Naive thymus-derived CD4-positive, alpha-beta T cell (primary cell): ENCODE measurements at regions of chr3 and their contacts with region 1.

Region 1: DNA sequence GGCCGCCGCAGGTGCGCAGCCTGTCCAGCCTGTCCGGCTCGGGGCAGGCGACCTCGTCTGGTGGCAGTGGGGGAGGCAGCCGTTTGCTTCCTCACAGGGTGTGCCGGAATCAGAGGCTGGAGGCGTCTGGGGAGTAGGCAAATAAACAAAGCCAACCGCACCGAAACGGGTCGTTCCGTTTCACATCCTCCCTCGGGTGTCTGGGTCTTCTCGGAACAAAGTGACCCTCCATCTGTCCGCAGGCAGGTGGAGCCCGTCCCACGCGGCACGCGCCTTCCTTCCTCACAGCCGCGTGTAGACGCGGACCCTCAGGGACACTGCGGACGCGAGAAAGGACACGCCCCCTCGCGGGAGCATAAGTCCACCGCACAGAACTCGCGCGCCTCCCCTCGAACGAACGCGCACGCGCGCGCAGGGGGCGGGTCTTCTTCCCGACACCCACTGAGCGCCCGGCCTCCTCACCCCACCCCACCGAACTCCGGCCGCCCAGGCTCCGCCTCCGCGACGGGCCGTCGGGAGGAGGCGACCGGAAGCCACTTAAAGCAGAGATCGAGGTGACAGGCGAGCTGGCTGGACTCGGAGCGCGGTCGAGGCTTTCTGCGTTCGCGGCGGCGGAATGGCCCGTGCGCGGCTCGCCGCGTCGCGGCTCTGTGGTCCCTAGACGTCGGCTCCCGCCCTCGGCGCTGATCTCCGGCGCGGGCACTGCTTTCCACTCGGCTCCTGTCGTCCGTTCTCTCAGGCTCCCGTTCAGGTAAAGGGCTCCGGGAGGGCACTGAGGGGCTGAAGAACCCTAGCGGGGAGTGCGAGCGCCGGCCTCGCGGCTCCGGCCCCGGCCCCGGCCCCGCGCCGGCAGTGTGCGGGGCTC is at the start of gene TIPARP:
- DNase-seq: peak; percentile 95 to 100 (median 98)
- ATAC-seq: peak; percentile 93
- H3K4me3 ChIP-seq: peak within 1 kb of the TSS; percentile 93
- H3K4me3 Mint-ChIP-seq: peak within 1 kb of the TSS; percentile 94 to 98 (median 97)
- H3K27ac ChIP-seq: peak within 1 kb of the TSS; percentile 85
- H3K27ac Mint-ChIP-seq: peak within 1 kb of the TSS; percentile 94 to 99 (median 97)
- H3K4me1 ChIP-seq: peaks cover 25 to 28% of the 10 kb centered on the region in 2 donors
- H3K4me1 Mint-ChIP-seq: peaks cover 34 to 44% (median 39%) of the 10 kb centered on the region in 7 donors
- H3K27me3 ChIP-seq: no peaks in the 10 kb centered on the region
- H3K27me3 Mint-ChIP-seq: no peaks in the 10 kb centered on the region
- total RNA-seq, gene TIPARP: 59.2 to 66.6 (median 64.3) TPM

Region 2: DNA sequence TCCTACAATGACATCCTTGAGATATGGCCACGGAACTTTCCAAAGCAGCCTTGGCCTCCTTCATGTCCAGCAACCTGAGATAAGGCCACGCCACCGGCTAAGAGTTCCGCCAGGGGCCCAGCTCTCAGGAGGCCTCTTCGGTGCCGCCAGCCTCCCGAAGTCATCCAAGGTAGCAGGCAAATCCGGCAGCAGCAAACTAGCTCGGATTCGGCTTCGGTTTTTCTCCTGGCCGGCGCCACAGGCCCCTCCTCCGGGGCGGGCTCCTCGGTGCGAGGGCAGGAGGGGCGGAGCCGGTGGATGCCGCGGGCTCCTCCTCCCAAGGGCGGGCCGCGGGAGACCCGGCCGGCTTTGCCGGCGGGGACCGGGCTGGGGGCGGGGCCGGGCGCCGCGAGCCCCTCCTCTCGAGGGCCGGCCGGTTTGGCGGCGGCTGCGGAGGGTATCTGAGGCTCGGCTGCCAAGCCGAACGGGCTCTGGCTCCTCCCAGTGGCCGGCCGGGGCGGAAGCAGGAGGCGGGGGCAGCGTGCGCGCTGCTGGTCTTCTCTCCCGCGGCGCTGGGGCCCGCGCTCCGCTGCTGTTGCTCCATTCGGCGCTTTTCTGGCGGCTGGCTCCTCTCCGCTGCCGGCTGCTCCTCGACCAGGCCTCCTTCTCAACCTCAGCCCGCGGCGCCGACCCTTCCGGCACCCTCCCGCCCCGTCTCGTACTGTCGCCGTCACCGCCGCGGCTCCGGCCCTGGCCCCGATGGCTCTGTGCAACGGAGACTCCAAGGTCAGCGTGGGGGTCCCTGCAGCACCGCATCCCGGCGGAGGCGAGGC is 803.9 kb before region 1 on chr3 and contains the start of gene GMPS:
- CTCF ChIA-PET with region 1: no interaction called
- POLR2A ChIA-PET with region 1: no interaction called
- intact Hi-C with region 1: loop called (anchors 5 kb)
- DNase-seq: peak; percentile 87 to 98 (median 96)
- ATAC-seq: peak; percentile 97
- H3K4me3 ChIP-seq: peak within 1 kb of the TSS; percentile 90
- H3K4me3 Mint-ChIP-seq: peak within 1 kb of the TSS; percentile 92 to 100 (median 98)
- H3K27ac ChIP-seq: peak within 1 kb of the TSS; percentile 94
- H3K27ac Mint-ChIP-seq: peak within 1 kb of the TSS; percentile 89 to 97 (median 96)
- H3K4me1 ChIP-seq: peaks cover 8% of the 10 kb centered on the region in 2 donors
- H3K4me1 Mint-ChIP-seq: peaks cover 17 to 35% (median 26%) of the 10 kb centered on the region in 7 donors
- H3K27me3 ChIP-seq: no peaks in the 10 kb centered on the region
- H3K27me3 Mint-ChIP-seq: no peaks in the 10 kb centered on the region
- total RNA-seq, gene GMPS: 36.3 to 85.1 (median 45.4) TPM

Region 3: GRCh38 chr3:156554842-156555687 is 119.2 kb before region 1 on chr3 and contains the start of gene SSR3:
- CTCF ChIA-PET with region 1: interaction called, 7 read pairs
- POLR2A ChIA-PET with region 1: interaction called, 46 read pairs
- intact Hi-C with region 1: loop called (anchors 1 kb)
- DNase-seq: peak; percentile 95 to 99 (median 98)
- ATAC-seq: peak; percentile 100
- H3K4me3 ChIP-seq: peak within 1 kb of the TSS; percentile 95
- H3K4me3 Mint-ChIP-seq: peak within 1 kb of the TSS; percentile 88 to 98 (median 97)
- H3K27ac ChIP-seq: peak within 1 kb of the TSS; percentile 85
- H3K27ac Mint-ChIP-seq: peak within 1 kb of the TSS; percentile 89 to 96 (median 92)
- H3K4me1 ChIP-seq: peaks cover 16% of the 10 kb centered on the region in 2 donors
- H3K4me1 Mint-ChIP-seq: peaks cover 29 to 57% (median 50%) of the 10 kb centered on the region in 7 donors
- H3K27me3 ChIP-seq: no peaks in the 10 kb centered on the region
- H3K27me3 Mint-ChIP-seq: no peaks in the 10 kb centered on the region
- total RNA-seq, gene SSR3: 56.0 to 158 (median 76.2) TPM

Region 4: DNA sequence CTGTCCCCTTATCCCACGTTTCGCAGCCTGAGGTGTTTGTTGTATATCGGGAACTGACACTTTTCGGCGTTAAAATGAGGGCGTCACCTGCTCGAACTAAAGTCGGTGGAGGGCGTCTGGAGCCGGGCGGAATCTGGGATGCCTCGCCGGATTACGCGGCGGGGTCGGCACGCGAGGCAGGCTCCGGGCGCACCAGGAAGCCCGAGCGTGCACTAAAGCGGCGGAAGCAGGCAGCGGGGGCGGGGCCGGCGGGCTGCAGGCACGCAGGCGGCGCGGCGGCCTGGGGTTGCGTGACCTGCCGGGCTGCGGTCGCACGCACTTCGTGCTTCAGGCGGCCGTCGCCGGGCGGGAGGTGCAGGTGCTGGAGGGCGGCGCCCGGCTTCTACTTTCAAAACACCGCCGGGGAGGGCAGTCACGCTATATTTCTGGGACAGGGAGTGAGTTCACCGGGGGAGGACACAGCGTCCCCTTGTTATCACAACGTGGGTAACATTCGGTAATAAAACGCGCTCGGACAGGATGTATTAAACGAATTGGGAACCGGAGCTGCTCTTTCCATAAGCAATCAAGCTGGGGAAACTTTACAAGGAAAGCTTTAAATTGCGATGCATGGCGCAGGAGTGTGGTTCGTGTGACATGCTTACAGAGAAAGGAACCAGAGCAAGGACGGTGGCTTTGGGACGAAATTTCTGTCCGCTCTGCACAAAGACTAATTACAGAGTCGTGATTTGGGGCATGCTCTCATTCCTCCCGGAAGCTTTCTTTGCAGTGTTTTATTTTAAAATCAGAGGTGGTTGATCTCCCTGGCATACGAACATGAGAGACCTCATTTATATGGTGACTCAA is 142.7 kb after region 1 on chr3:
- CTCF ChIA-PET with region 1: no interaction called
- POLR2A ChIA-PET with region 1: interaction called, 14 read pairs
- intact Hi-C with region 1: loop called (anchors 1 kb)
- DNase-seq: peak; percentile 68 to 90 (median 81)
- ATAC-seq: peak; percentile 89
- H3K4me3 ChIP-seq: peak overlapping the region; percentile 64
- H3K4me3 Mint-ChIP-seq: peak overlapping the region; percentile 87 to 97 (median 95)
- H3K27ac ChIP-seq: peak overlapping the region; percentile 67
- H3K27ac Mint-ChIP-seq: peak overlapping the region; percentile 90 to 99 (median 96)
- H3K4me1 ChIP-seq: peaks cover 8 to 10% of the 10 kb centered on the region in 2 donors
- H3K4me1 Mint-ChIP-seq: peaks cover 6 to 72% (median 29%) of the 10 kb centered on the region in 7 donors
- H3K27me3 ChIP-seq: no peaks in the 10 kb centered on the region
- H3K27me3 Mint-ChIP-seq: no peaks in the 10 kb centered on the region

Region 5: GRCh38 chr3:157088601-157089454 is 414.6 kb after region 1 on chr3:
- CTCF ChIA-PET with region 1: interaction called, 3 read pairs
- POLR2A ChIA-PET with region 1: interaction called, 43 read pairs
- intact Hi-C with region 1: loop called (anchors 1 kb)
- DNase-seq: peak; percentile 90 to 97 (median 93)
- ATAC-seq: peak; percentile 95
- H3K4me3 ChIP-seq: peak overlapping the region; percentile 84
- H3K4me3 Mint-ChIP-seq: peak overlapping the region; percentile 81 to 89 (median 87)
- H3K27ac ChIP-seq: peak overlapping the region; percentile 83
- H3K27ac Mint-ChIP-seq: peak overlapping the region; percentile 92 to 98 (median 96)
- H3K4me1 ChIP-seq: peaks cover 11 to 30% of the 10 kb centered on the region in 2 donors
- H3K4me1 Mint-ChIP-seq: peaks cover 11 to 79% (median 23%) of the 10 kb centered on the region in 7 donors
- H3K27me3 ChIP-seq: no peaks in the 10 kb centered on the region
- H3K27me3 Mint-ChIP-seq: peaks cover 0 to 6% (median 0%) of the 10 kb centered on the region in 5 donors

Region 6: DNA sequence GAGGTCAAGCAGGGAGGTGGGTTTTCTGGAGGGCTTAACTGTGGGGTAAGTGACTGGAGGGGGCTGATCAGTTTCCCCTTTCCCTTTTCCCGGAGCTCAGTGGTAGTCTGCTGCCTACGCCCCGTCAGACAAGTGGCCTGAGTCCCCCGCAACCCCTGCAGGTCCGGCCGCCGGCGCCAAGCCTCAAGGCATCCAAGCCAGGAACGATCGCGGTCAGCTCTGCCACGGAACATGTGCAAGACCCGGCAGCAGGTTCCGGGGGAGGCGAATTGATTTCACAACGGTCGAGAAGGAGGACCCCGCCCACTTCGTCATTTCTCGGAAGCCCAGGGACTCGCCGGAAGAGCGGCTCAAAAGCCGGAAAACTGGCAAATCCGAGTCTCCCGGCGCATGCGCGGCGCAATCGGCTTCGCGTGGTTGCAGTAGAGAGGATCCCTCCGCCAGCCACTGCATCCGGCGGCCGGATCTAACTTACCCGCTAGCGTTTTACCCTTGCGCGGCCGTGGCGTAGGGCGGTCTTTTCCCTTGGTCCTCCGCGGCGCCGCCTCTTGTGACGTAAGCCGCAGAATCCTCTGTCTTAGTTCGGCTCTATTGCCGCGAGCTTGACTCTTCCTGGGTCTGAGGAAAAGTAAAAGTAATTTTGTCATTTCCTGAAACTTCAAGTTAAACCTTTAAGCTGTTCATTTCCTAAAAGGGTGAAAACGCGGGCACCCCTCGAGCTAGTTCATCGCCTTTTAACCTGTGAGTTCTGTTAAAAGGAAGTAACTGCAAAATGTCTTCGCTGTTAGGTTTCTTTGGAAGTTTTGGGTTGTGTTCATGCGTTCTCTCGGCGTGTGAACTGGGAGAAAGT is 500.6 kb after region 1 on chr3:
- CTCF ChIA-PET with region 1: no interaction called
- POLR2A ChIA-PET with region 1: interaction called, 7 read pairs
- intact Hi-C with region 1: loop called (anchors 1 kb)
- DNase-seq: peak; percentile 89 to 99 (median 99)
- ATAC-seq: peak; percentile 97
- H3K4me3 ChIP-seq: peak overlapping the region; percentile 81
- H3K4me3 Mint-ChIP-seq: peak overlapping the region; percentile 86 to 99 (median 93)
- H3K27ac ChIP-seq: peak overlapping the region; percentile 97
- H3K27ac Mint-ChIP-seq: peak overlapping the region; percentile 91 to 100 (median 98)
- H3K4me1 ChIP-seq: peaks cover 17 to 25% of the 10 kb centered on the region in 2 donors
- H3K4me1 Mint-ChIP-seq: peaks cover 14 to 45% (median 35%) of the 10 kb centered on the region in 7 donors
- H3K27me3 ChIP-seq: no peaks in the 10 kb centered on the region
- H3K27me3 Mint-ChIP-seq: peaks cover 0 to 8% (median 0%) of the 10 kb centered on the region in 5 donors